Activated B cell treated with CpG ODN at 0.5 μM for 24 hours (primary cell): ENCODE measurements at regions of chr1 and their contacts with region 1.

Region 1: DNA sequence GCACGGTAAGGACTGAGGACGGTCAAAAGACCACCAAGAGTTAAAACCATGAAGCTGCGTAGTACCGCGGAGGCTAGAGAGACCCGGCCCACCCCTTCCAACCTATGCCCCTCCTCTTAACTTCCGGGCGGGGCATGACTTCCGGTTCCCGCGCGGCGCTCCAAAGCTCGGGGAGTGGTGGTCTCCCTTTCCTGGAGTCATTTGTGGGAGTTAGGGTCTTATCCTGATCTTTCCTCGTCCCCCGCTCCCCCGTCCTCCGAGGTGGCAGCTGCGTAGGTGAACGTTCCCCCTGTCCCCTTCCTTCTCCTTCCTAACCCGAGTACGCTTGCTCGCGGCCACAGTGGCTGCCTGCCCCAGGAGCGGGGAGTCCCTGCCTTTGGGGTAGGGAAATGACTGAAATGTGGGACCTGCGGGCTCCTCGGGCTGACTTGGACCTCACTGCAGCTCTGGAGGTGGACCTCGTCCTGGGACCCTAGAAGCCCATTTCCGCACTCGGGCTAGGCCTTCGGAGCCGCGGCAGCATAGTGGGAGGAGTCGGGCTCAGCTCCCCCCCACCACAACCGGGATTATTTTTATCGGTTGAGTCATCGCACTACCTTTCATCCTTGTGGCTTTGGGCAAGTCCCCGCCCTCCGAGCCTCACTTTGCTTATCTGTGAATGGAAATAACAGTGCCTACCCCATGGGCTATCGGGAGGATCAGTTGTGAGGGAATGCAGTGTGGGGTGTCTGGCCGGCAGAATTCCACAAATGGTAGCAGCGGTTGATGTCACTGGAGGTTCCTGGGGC is 24.1 kb downstream of the CELA3A start:
- DNase-seq: peak; percentile 79
- ATAC-seq: peak; percentile 76
- H3K4me3 Mint-ChIP-seq: peak overlapping the region; percentile 96
- H3K27ac Mint-ChIP-seq: peak overlapping the region; percentile 99
- H3K4me1 Mint-ChIP-seq: peaks cover 54% of the 10 kb centered on the region
- H3K27me3 Mint-ChIP-seq: no peaks in the 10 kb centered on the region
- CTCF ChIP-seq: no peak

Region 2: GRCh38 chr1:21659099-21659923 is 366.3 kb before region 1 on chr1:
- CTCF ChIA-PET with region 1: no interaction called
- POLR2A ChIA-PET with region 1: no interaction called
- intact Hi-C with region 1: loop called (anchors 5 kb)
- DNase-seq: peak; percentile 77
- ATAC-seq: peak; percentile 97
- H3K4me3 Mint-ChIP-seq: peak overlapping the region; percentile 32
- H3K27ac Mint-ChIP-seq: no peak overlapping the region
- H3K4me1 Mint-ChIP-seq: peaks cover 11% of the 10 kb centered on the region
- H3K27me3 Mint-ChIP-seq: peaks cover 25% of the 10 kb centered on the region
- CTCF ChIP-seq: no peak

Region 3: DNA sequence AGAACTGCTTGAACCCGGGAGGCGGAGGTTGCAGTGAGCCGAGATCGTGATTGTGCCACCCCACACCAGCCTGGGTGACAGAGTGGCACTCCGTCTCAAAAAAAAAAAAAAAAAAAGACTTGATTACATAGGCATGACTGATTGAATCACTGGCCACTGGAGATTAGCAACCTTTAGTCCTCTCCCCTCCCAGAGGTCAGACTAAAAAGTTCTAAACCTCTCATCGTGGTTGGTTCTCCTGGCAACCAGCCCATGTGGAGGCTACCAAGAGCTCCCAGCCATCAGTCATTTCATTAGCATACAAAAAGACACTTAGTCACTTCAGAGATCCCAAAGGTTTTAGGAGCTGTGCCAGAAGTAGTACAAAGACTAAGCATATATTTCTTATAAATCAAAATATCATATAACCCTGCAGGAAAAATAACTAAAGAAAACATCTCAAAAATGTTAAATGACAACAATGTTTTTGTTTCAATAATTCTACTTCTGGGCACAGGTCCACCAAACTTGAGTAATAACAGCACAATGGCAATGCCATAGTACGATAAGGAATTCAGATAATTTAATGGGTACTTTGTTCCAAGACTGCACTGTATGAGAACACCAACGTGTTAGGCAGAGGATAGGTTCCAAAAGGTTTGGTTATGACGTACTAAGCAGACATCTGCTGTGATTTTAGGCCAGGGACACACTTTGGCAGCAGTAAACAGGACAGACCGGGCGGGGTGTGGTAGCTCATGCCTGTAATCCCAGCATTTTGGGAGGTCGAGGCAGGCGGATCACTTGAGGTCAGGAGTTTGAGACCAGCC is 260.7 kb before region 1 on chr1:
- CTCF ChIA-PET with region 1: no interaction called
- POLR2A ChIA-PET with region 1: interaction called, 12 read pairs
- intact Hi-C with region 1: no loop called
- DNase-seq: no peak
- ATAC-seq: no peak
- H3K4me3 Mint-ChIP-seq: no peak overlapping the region
- H3K27ac Mint-ChIP-seq: peak overlapping the region; percentile 57
- H3K4me1 Mint-ChIP-seq: peaks cover 75% of the 10 kb centered on the region
- H3K27me3 Mint-ChIP-seq: no peaks in the 10 kb centered on the region
- CTCF ChIP-seq: no peak

Region 4: DNA sequence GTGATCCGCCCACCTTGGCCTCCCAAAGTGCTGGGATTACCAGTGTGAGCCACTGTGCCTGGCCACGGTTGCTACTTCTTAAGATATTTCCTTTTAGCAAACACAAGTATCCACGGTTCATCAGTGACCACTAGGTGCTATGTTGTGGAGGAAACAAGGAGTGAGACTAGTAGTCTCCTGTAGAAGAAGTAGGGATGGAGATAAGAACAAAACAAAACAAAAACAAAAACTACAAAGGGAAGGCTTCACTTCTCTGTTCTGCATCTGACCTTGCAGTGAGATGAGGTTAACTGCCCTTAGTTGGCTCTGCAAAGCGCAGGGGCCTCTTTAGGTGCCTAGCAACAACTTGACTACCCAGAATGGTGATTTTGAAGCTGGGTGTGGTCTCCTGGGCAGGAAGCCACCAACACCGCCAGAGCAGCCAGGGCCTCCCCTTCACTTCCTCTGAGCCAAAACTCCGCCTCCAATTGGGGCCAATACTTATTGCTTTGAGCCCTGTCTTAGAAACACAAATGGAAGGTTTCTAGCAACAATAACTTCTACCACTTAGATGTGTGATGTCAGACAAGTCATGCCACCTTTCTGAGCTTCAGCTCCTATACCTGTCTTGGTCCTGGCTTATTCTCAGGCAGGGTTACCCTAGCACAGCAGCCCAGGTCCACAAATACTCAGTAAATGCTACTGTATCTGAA is 14.2 kb after region 1 on chr1:
- CTCF ChIA-PET with region 1: interaction called, 5 read pairs
- POLR2A ChIA-PET with region 1: interaction called, 659 read pairs
- intact Hi-C with region 1: loop called (anchors 1 kb)
- DNase-seq: peak; percentile 62
- ATAC-seq: peak; percentile 98
- H3K4me3 Mint-ChIP-seq: peak overlapping the region; percentile 76
- H3K27ac Mint-ChIP-seq: peak overlapping the region; percentile 95
- H3K4me1 Mint-ChIP-seq: peaks cover 53% of the 10 kb centered on the region
- H3K27me3 Mint-ChIP-seq: no peaks in the 10 kb centered on the region
- CTCF ChIP-seq: no peak

Region 5: DNA sequence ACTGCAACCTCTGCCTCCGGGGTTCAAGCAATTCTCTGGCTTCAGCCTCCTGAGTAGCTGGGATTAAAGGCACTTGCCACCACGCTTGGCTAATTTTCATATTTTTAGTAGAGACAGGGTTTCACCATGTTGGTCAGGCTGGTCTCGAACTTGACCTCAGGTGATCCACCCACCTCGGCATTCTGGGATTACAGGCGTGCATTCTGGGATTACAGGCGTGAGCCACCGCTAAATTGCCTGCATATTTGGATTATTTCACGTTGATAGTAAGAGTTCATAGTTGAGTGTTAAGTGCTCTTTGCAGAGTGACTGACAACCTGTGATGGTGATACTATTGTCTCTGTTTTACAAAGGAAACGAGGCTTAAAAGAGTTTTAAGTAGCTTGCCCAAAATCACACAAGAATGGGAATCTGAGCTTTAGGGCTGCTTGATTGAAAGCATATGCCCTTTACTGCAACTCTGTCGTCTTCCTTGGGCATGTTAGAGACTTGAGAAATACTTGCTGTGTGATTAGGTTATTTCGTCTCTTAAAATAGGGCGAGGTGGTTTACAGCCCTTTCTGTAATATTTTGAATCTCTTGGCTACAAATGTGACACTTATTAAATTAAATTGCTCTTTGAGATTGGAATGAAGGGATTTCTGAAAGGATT is 39.3 kb after region 1 on chr1:
- CTCF ChIA-PET with region 1: interaction called, 10 read pairs
- POLR2A ChIA-PET with region 1: interaction called, 25 read pairs
- intact Hi-C with region 1: no loop called
- DNase-seq: no peak
- ATAC-seq: no peak
- H3K4me3 Mint-ChIP-seq: peak overlapping the region; percentile 56
- H3K27ac Mint-ChIP-seq: no peak overlapping the region
- H3K4me1 Mint-ChIP-seq: peaks cover 95% of the 10 kb centered on the region
- H3K27me3 Mint-ChIP-seq: no peaks in the 10 kb centered on the region
- CTCF ChIP-seq: no peak

Region 6: DNA sequence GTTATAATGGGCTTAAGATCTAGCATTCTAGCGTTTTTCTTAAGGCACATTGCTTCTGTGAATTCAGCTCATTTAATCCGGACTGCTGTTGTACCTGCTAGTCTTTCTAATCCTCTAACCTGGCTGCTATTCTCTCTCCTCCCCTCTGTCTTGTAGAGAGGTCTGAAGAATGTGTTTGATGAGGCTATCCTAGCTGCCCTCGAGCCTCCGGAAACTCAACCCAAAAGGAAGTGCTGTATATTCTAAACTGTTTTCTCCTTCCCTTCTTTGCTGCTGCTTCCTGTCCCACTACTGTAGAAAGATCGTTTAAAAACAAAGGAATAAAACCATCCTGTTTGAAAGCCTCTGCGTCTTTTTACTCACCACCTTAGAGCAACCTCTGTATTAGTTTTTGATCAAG is 64.2 kb after region 1 on chr1:
- CTCF ChIA-PET with region 1: interaction called, 4 read pairs
- POLR2A ChIA-PET with region 1: interaction called, 28 read pairs
- intact Hi-C with region 1: loop called (anchors 1 kb)
- DNase-seq: no peak
- ATAC-seq: no peak
- H3K4me3 Mint-ChIP-seq: peak overlapping the region; percentile 42
- H3K27ac Mint-ChIP-seq: peak overlapping the region; percentile 57
- H3K4me1 Mint-ChIP-seq: peaks cover 83% of the 10 kb centered on the region
- H3K27me3 Mint-ChIP-seq: no peaks in the 10 kb centered on the region
- CTCF ChIP-seq: no peak